Left cardiac atrium (tissue), 4 donors: ENCODE measurements at regions of chr14 and their contacts with region 1.

Region 1: GRCh38 chr14:99628832-99629618 is 15.9 kb upstream of the HHIPL1 start:
- DNase-seq: peak; percentile 80
- ATAC-seq: peak; percentile 91 to 92

Region 2: DNA sequence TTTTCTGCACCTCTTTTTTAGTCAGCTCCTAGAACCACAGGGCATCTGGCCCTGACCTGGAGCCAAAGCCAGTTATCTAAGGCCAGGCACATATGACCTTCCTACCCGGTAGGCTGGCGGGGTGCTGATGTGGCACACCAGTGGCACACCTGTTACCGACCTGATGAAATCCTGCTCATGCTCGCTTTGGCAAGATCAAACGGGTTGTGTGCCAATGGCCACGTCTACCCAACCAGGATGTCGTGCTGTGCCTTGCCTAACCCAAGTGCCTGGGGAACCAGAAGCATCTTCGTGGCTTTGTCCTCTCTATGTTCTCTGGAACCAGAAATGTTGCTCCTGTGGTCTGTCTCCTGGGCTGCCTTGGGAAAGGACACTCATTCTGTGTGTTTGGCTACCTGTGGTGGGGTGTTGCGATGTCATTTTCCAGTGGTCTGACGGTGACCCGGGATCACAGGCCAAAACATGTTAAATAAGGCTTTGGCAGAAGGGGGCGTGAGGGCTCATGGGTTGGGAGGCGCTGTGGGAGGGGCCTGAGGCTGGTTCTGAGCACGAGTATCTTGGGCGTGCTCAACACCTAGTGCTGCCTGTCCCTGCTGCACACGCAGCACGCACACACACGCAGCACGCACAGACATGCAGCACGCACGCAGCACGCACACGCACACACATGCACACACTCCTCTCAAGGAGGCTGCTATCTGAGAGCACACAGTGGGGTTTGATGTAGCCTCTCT is 120.0 kb before region 1 on chr14:
- intact Hi-C with region 1: loop called in 1 of 2 experiments (anchors 5 kb)
- DNase-seq: no peak
- ATAC-seq: peak in 1 of 2 donors; percentile 3

Region 3: DNA sequence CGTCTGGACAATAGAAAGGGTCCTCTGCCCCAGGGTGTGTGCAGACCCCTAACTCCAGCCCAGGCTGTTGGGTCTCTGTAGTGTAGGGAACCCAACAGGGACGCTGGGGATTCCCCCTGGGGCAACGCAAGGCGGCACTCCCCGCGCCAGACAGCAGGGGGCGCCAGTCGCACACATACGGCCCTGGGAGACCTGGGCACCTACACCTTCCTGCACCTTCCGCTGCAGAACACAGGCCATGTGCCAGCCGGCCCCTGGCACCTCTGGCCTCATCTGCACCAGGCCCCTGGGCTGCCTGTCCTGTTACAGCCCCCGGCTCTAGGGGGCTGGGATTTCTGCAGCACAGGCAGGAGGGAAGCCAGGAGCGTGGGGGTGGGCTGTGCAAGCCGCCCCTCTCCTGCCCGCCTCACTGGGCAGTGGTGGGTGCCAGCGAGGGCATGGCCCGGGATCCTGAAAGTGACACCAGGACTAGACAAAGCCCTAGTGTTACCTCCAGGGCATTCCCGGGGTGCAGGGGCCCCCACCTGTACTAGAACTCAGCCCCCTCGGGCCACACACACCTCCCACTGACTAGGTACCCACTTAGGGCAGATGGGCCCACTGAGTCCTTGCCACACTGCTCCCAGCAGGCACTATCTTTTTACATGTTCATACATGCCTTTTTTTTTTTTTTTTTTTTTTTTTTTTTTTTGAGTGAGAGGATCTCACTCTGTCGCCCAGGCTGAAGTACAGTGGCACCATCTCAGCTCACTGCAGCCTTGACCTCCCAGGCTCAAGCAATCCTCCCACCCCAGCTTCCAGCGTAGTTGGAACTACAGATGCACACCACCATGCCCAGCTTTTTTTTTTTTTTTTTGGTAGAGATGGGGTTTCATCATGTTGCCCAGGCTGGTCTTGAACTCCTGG is 110.3 kb before region 1 on chr14:
- intact Hi-C with region 1: loop called (anchors 1 to 2 kb)
- DNase-seq: peak; percentile 70
- ATAC-seq: peak; percentile 58 to 68

Region 4: DNA sequence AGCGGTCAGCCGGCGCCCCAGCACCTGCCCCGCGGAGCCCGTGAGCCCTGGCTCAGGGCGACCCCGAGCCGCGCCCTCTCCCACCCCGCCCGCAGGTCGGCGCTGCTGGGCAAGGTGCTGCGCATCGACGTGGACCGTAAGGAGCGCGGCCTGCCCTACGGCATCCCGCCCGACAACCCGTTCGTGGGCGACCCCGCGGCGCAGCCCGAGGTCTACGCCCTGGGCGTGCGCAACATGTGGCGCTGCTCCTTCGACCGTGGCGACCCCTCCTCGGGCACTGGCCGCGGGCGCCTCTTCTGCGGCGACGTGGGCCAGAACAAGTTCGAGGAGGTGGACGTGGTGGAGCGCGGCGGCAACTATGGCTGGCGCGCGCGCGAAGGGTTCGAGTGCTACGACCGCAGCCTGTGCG is 30.3 kb after region 1 on chr14:
- intact Hi-C with region 1: no loop called
- DNase-seq: no peak
- ATAC-seq: peak in 1 of 2 donors; percentile 9